Activated CD4-positive, alpha-beta T cell treated with anti-CD3 and anti-CD28 coated beads, Interleukin-2, amount 10 ng/mL, durations not matched to agents 7 days and 5 days (primary cell): ENCODE measurements at regions of chr2 and their contacts with region 1.

Region 1: DNA sequence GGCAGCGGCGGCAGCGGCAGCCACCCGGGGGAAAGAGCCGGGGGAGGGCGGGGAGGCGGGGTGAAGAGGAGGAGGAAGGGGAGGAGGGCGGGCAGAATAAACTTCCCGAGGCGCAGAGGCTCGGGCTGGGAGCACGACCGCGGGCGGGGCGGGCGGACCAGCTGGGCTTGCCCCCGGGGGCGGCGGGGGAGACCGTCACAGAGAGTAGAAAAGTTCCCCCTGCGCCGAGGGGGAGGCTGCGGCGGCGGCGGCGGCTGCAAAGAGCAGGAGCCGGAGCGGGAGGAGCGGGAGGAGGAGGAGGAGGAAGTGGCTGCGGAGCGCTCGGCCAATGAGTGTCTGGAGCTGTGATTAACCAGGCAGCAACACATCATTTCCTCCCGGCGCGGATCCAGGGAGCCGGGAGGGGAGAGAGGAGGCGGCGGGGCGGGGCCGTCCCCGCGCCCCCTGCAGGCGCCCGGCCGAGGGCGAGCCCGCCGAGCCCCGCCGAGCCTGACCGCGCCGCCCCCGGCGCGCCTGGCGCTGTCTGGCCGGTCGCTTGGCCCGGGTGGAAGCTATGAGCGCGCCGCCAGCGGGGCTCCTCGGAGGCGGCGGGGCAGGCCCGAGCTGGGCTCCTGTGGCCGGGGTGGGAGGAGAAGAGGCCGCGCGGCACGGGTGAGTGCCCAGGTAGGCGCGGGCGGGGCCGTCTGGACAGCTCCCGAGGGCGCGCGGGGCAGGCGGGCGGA is at the start of gene ACVR1:
- DNase-seq: peak; percentile 89
- H3K4me3 Mint-ChIP-seq: peak within 1 kb of the TSS; percentile 96
- H3K27ac Mint-ChIP-seq: peak within 1 kb of the TSS; percentile 94
- H3K4me1 Mint-ChIP-seq: peaks cover 63% of the 10 kb centered on the region
- H3K27me3 Mint-ChIP-seq: no peaks in the 10 kb centered on the region
- total RNA-seq, gene ACVR1: 26.0 to 29.6 TPM

Region 2: GRCh38 chr2:157890969-157891639 is 14.9 kb after region 1 on chr2:
- CTCF ChIA-PET with region 1: interaction called, 11 read pairs
- POLR2A ChIA-PET with region 1: interaction called, 4 read pairs
- DNase-seq: no peak
- H3K4me3 Mint-ChIP-seq: peak overlapping the region; percentile 62
- H3K27ac Mint-ChIP-seq: peak overlapping the region; percentile 90
- H3K4me1 Mint-ChIP-seq: peaks cover 60% of the 10 kb centered on the region
- H3K27me3 Mint-ChIP-seq: no peaks in the 10 kb centered on the region

Region 3: GRCh38 chr2:157898591-157898996 is 22.4 kb after region 1 on chr2:
- CTCF ChIA-PET with region 1: interaction called, 17 read pairs
- POLR2A ChIA-PET with region 1: interaction called, 6 read pairs
- DNase-seq: peak; percentile 54
- H3K4me3 Mint-ChIP-seq: peak overlapping the region; percentile 76
- H3K27ac Mint-ChIP-seq: peak overlapping the region; percentile 100
- H3K4me1 Mint-ChIP-seq: peaks cover 80% of the 10 kb centered on the region
- H3K27me3 Mint-ChIP-seq: no peaks in the 10 kb centered on the region

Region 4: DNA sequence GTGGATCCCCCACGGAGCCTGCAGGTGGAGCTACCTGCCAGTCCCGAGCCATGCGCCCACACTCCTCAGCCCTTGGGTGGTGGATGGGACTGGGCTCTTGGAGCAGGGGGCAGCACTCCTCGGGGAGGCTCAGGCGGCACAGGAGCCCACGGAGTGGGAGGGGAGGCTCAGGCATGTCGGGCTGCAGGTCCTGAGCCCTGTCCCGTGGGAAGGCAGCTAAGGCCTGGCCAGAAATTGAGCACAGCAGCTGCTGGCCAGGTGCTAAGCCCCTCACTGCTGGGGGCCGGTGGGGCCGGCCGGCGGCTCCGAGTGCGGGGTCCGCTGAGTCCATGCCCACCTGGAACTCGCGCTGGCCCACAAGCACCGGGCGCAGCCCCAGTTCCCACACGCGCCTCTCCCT is 91.6 kb after region 1 on chr2:
- CTCF ChIA-PET with region 1: no interaction called
- POLR2A ChIA-PET with region 1: no interaction called
- DNase-seq: no peak
- H3K4me3 Mint-ChIP-seq: no peak overlapping the region
- H3K27ac Mint-ChIP-seq: no peak overlapping the region
- H3K4me1 Mint-ChIP-seq: no peaks in the 10 kb centered on the region
- H3K27me3 Mint-ChIP-seq: no peaks in the 10 kb centered on the region